Activated naive CD4-positive, alpha-beta T cell treated with anti-CD3 and anti-CD28 coated beads for 36 hours (primary cell): ENCODE measurements at regions of chr19 and their contacts with region 1.

Region 1: DNA sequence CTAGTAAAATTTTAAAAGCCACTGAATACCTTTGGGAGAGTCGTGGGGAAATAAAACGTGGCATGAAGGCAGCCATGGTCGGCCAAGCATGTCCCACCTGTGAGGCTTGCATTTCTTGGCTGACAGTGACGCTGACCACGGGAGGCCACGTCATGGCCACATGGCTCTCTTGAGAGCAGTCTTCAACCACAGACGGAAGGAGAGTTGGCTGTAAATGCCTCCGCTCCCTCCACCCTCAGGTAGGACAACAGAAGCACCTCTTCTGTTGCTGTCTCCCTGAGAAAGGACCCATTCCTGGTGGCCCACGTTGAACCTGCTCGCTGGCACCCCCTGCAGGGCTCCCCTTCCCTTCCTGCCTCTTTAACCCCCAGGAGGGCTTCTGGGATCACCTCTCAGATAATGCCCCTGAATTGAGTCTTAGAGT is 10.6 kb upstream of the LRRC25 start:
- DNase-seq: peak; percentile 46
- H3K4me3 Mint-ChIP-seq: no peak overlapping the region
- H3K27ac Mint-ChIP-seq: no peak overlapping the region
- H3K4me1 Mint-ChIP-seq: no peaks in the 10 kb centered on the region
- H3K27me3 Mint-ChIP-seq: peaks cover 10% of the 10 kb centered on the region

Region 2: GRCh38 chr19:18227781-18228271 is 180.2 kb before region 1 on chr19:
- CTCF ChIA-PET with region 1: no interaction called
- intact Hi-C with region 1: no loop called
- DNase-seq: no peak
- H3K4me3 Mint-ChIP-seq: no peak overlapping the region
- H3K27ac Mint-ChIP-seq: no peak overlapping the region
- H3K4me1 Mint-ChIP-seq: peaks cover 28% of the 10 kb centered on the region
- H3K27me3 Mint-ChIP-seq: peaks cover 68% of the 10 kb centered on the region

Region 3: DNA sequence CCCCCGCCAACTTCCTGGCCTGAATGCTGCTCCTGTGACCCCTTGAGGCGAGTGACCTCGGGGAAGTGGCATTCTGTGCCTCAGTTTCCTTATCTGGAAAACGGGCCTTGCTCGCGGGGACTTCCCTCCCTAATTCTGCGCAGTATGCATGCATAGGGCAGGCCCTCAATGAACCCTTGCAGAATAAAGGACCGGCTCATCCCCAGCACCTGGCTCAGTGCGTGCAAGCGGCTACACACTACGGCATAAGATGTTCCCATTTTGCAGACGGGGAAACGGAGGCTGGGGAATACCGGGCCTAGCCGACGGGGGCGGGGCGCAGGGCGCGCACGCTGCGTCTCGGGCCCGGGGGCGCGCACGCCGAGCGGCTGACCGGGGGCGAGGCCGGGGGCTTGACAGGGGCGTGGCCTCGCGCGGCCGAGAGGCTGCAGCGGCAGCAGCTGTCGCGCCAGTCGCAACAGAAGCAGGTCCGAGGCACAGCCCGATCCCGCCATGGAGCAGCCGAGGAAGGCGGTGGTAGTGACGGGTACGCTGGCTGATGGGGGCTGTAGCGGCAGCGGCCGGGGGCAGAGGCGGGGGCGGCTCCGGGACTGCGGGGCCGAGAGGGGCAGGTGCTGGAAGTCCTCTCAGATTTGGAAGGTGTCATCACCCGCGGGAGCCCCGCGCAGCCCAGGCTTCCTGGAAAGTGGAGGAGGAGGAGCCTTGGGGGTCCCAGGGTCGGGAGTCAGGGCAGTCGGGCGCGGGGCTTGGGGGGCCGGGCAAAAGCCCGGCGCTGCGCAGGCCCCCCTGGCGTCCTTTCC is 67.7 kb before region 1 on chr19 and contains the start of gene PGPEP1:
- CTCF ChIA-PET with region 1: interaction called, 18 read pairs
- intact Hi-C with region 1: loop called (anchors 2 kb)
- DNase-seq: peak; percentile 54
- H3K4me3 Mint-ChIP-seq: peak within 1 kb of the TSS; percentile 77
- H3K27ac Mint-ChIP-seq: peak within 1 kb of the TSS; percentile 73
- H3K4me1 Mint-ChIP-seq: peaks cover 15% of the 10 kb centered on the region
- H3K27me3 Mint-ChIP-seq: no peaks in the 10 kb centered on the region
- total RNA-seq, gene PGPEP1: 14.4 to 15.6 TPM

Region 4: GRCh38 chr19:18349524-18350128 is 58.4 kb before region 1 on chr19:
- CTCF ChIA-PET with region 1: interaction called, 5 read pairs
- intact Hi-C with region 1: loop called (anchors 1 kb)
- DNase-seq: peak; percentile 74
- H3K4me3 Mint-ChIP-seq: no peak overlapping the region
- H3K27ac Mint-ChIP-seq: no peak overlapping the region
- H3K4me1 Mint-ChIP-seq: no peaks in the 10 kb centered on the region
- H3K27me3 Mint-ChIP-seq: no peaks in the 10 kb centered on the region

Region 5: DNA sequence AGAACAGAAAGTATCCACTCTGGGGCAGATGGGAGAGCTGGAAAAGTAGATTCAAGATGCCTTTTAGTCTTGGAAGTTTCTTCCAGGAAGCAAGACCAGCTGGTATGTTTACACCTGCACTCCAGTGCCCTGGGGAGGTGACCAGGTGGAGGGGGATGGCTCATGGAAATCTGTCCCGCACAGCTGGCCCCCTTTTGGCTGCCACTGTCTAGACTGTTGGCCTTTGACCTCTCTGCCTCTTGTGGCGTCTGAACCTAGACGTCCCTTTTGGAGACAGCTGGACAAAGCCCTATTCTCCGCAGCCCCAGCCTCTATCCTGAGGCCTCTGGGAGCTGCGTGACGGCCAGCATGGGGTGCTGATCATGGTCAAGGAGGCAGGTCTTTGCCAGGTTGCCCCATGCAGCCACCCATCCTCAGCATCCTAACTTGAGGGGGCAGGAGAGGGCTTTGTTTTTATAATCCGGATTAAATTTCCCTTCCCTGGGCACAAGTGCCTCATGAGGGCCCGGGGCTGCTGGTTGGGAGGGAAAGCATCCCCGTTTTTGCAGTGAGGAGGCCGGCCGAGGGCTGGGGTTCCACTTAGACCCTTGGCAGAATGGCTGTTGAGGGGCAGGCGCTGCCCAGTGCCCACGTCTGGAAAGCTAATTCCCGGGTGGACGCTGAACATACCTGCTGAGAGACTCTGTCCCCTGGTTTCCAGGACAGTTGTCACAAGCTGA is 39.4 kb before region 1 on chr19:
- CTCF ChIA-PET with region 1: no interaction called
- intact Hi-C with region 1: no loop called
- DNase-seq: no peak
- H3K4me3 Mint-ChIP-seq: no peak overlapping the region
- H3K27ac Mint-ChIP-seq: no peak overlapping the region
- H3K4me1 Mint-ChIP-seq: peaks cover 2% of the 10 kb centered on the region
- H3K27me3 Mint-ChIP-seq: no peaks in the 10 kb centered on the region

Region 6: GRCh38 chr19:18388100-18388959 is 19.7 kb before region 1 on chr19:
- CTCF ChIA-PET with region 1: interaction called, 103 read pairs
- intact Hi-C with region 1: loop called (anchors 1 kb)
- DNase-seq: peak; percentile 78
- H3K4me3 Mint-ChIP-seq: peak overlapping the region; percentile 60
- H3K27ac Mint-ChIP-seq: no peak overlapping the region
- H3K4me1 Mint-ChIP-seq: no peaks in the 10 kb centered on the region
- H3K27me3 Mint-ChIP-seq: peaks cover 32% of the 10 kb centered on the region